H1 (cell line): ENCODE measurements at regions of chr16 and their contacts with region 1.

Region 1: GRCh38 chr16:1538804-1539572 is 5.5 kb downstream of the TMEM204 start:
- DNase-seq: peak in 1 of 2 experiments; percentile 71
- H3K4me3 ChIP-seq: no peak overlapping the region
- H3K27ac ChIP-seq: no peak overlapping the region
- H3K4me1 ChIP-seq: no peaks in the 10 kb centered on the region
- H3K27me3 ChIP-seq: no peaks in the 10 kb centered on the region
- CTCF ChIP-seq: peak; percentile 56 to 69 (median 62)
- EP300 ChIP-seq: no peak
- POLR2A ChIP-seq: no peak
- RAD21 ChIP-seq: peak; percentile 58 to 69

Region 2: DNA sequence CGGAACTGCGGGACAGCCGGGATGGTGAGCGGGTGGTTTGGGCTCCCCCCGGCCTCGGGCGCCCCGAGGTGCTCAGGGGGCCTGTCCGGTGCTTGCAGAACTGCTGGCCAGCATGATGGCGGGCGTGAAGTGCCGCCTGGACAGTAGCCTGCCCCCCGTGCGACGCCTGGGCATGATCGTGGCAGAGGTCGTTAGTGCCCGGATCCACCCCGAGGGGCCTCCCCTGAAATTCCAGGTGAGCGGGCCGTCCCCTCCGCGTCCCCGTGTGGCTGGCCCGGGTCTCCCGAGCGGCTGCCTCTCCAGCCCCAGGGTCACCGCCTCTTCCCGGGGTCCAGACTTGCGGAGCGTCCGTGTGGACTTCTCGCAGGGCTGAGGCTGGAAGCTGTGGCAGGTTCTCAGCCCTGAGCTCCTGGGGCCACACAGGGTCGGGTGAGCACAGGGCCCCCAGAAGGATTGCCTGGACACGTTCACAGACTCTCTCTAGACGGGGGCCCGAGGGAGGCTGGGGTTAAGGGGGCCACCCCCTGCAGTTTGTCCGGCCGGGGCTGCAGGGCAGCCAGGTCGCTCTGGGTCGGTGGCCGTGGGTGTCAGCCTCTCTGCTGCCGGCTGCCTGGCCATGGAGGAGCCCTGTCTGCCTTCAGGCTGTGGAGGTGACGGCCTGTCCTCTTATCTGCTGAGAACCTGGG is 38.4 kb before region 1 on chr16:
- CTCF ChIA-PET with region 1: no interaction called
- POLR2A ChIA-PET with region 1: no interaction called
- DNase-seq: no peak
- H3K4me3 ChIP-seq: no peak overlapping the region
- H3K27ac ChIP-seq: no peak overlapping the region
- H3K4me1 ChIP-seq: no peaks in the 10 kb centered on the region
- H3K27me3 ChIP-seq: no peaks in the 10 kb centered on the region
- CTCF ChIP-seq: no peak
- EP300 ChIP-seq: no peak
- POLR2A ChIP-seq: no peak
- RAD21 ChIP-seq: no peak

Region 3: GRCh38 chr16:1527836-1528811 is 10.9 kb before region 1 on chr16:
- CTCF ChIA-PET with region 1: interaction called, 11 read pairs
- POLR2A ChIA-PET with region 1: no interaction called
- DNase-seq: no peak
- H3K4me3 ChIP-seq: no peak overlapping the region
- H3K27ac ChIP-seq: no peak overlapping the region
- H3K4me1 ChIP-seq: no peaks in the 10 kb centered on the region; a peak in 1 of 7 replicates
- H3K27me3 ChIP-seq: no peaks in the 10 kb centered on the region
- CTCF ChIP-seq: no peak
- EP300 ChIP-seq: no peak
- POLR2A ChIP-seq: no peak
- RAD21 ChIP-seq: no peak

Region 4: GRCh38 chr16:1561266-1561665 is 22.3 kb after region 1 on chr16:
- CTCF ChIA-PET with region 1: no interaction called
- POLR2A ChIA-PET with region 1: no interaction called
- DNase-seq: no peak
- H3K4me3 ChIP-seq: no peak overlapping the region
- H3K27ac ChIP-seq: no peak overlapping the region
- H3K4me1 ChIP-seq: peaks cover 0 to 3% (median 0%) of the 10 kb centered on the region in 4 experiments; a peak in 1 of 7 replicates
- H3K27me3 ChIP-seq: no peaks in the 10 kb centered on the region
- CTCF ChIP-seq: no peak
- EP300 ChIP-seq: no peak
- POLR2A ChIP-seq: no peak
- RAD21 ChIP-seq: no peak

Region 5: GRCh38 chr16:1597154-1597553 is 58.2 kb after region 1 on chr16:
- CTCF ChIA-PET with region 1: no interaction called
- POLR2A ChIA-PET with region 1: no interaction called
- DNase-seq: no peak
- H3K4me3 ChIP-seq: no peak overlapping the region
- H3K27ac ChIP-seq: no peak overlapping the region
- H3K4me1 ChIP-seq: no peaks in the 10 kb centered on the region
- H3K27me3 ChIP-seq: no peaks in the 10 kb centered on the region
- CTCF ChIP-seq: no peak
- EP300 ChIP-seq: no peak
- POLR2A ChIP-seq: no peak
- RAD21 ChIP-seq: no peak